HepG2 (cell line): ENCODE measurements at regions of chr3 and their contacts with region 1.

Region 1: GRCh38 chr3:39849992-39850715 is 40.7 kb downstream of the MYRIP start:
- DNase-seq: no peak
- ATAC-seq: no peak
- H3K4me3 ChIP-seq: no peak overlapping the region
- H3K27ac ChIP-seq: no peak overlapping the region
- H3K4me1 ChIP-seq: no peaks in the 10 kb centered on the region
- H3K27me3 ChIP-seq: no peaks in the 10 kb centered on the region
- CTCF ChIP-seq: no peak
- EP300 ChIP-seq: no peak
- POLR2A ChIP-seq: no peak
- RAD21 ChIP-seq: no peak

Region 2: GRCh38 chr3:39639344-39640236 is 210.6 kb before region 1 on chr3:
- CTCF ChIA-PET with region 1: no interaction called
- POLR2A ChIA-PET with region 1: no interaction called
- in situ Hi-C with region 1: no loop called
- intact Hi-C with region 1: no loop called
- DNase-seq: peak; percentile 40
- ATAC-seq: no peak; the same call in 2 of the 3 replicates
- H3K4me3 ChIP-seq: no peak overlapping the region
- H3K27ac ChIP-seq: no peak overlapping the region
- H3K4me1 ChIP-seq: no peaks in the 10 kb centered on the region
- H3K27me3 ChIP-seq: no peaks in the 10 kb centered on the region
- CTCF ChIP-seq: no peak
- EP300 ChIP-seq: no peak
- POLR2A ChIP-seq: no peak
- RAD21 ChIP-seq: no peak

Region 3: GRCh38 chr3:39819899-39820298 is 30.3 kb before region 1 on chr3:
- CTCF ChIA-PET with region 1: no interaction called
- POLR2A ChIA-PET with region 1: no interaction called
- in situ Hi-C with region 1: no loop called
- intact Hi-C with region 1: loop called (anchors 1 kb)
- DNase-seq: no peak
- ATAC-seq: no peak
- H3K4me3 ChIP-seq: no peak overlapping the region
- H3K27ac ChIP-seq: no peak overlapping the region
- H3K4me1 ChIP-seq: no peaks in the 10 kb centered on the region
- H3K27me3 ChIP-seq: no peaks in the 10 kb centered on the region; a peak in 1 of 5 replicates
- CTCF ChIP-seq: no peak
- EP300 ChIP-seq: no peak
- POLR2A ChIP-seq: no peak
- RAD21 ChIP-seq: no peak

Region 4: GRCh38 chr3:40054568-40055222 is 204.5 kb after region 1 on chr3:
- CTCF ChIA-PET with region 1: no interaction called
- POLR2A ChIA-PET with region 1: no interaction called
- in situ Hi-C with region 1: no loop called
- intact Hi-C with region 1: no loop called
- DNase-seq: no peak
- ATAC-seq: no peak
- H3K4me3 ChIP-seq: no peak overlapping the region
- H3K27ac ChIP-seq: no peak overlapping the region
- H3K4me1 ChIP-seq: no peaks in the 10 kb centered on the region
- H3K27me3 ChIP-seq: no peaks in the 10 kb centered on the region
- CTCF ChIP-seq: no peak
- EP300 ChIP-seq: no peak
- POLR2A ChIP-seq: no peak
- RAD21 ChIP-seq: no peak